ENCODE measurements at regions of chrX and their contacts with region 1.

Region 1: DNA sequence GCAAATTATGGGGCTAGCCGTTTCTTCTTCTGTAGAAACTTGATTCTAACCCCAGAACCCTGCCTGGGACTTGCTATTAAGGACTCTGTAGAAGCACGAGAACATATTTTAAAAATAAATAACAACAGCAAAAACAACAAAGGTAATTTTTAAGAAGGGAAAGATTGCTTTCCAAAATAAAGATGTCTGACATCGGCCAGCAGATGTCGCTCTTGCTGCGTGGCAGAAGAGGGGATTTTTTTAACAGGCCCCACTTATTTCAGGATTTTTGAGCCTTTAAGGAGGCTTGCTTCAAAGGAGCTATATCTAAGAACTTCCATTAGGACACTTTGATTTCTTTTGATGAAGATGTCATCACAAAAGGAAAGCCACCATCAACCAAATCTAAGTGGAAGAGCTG is 62.8 kb upstream of the EGFL6 start:
- DNase-seq: peak; percentile 56
- H3K4me3 ChIP-seq: no peak overlapping the region
- H3K27ac ChIP-seq: no peak overlapping the region
- H3K4me1 ChIP-seq: no peaks in the 10 kb centered on the region
- H3K27me3 ChIP-seq: no peaks in the 10 kb centered on the region
- CTCF ChIP-seq: peak; percentile 64 to 87 (median 71)
- EP300 ChIP-seq: no peak
- POLR2A ChIP-seq: no peak

Region 2: DNA sequence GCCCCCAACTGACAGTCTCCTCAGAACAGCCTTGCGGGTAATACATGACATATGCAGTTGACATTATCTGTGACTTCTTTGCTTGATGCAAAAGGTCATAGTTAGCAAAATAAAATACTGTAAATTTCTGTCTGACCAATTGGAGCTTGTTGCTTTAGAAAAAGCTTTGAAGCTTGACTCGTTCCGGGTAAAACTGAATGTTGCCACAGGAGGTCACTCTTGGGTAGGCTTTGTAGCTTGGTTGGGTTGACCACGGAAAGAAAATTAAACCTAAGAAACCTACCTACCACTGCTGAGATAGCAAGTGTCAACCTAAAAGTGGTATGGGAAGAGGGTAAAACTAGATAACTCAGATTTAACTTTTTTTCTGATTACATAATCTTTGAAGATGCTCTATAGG is 692.2 kb before region 1 on chrX:
- in situ Hi-C with region 1: loop called in 1 of 4 experiments (anchors 25 kb)
- intact Hi-C with region 1: no loop called
- DNase-seq: peak; percentile 41
- H3K4me3 ChIP-seq: no peak overlapping the region
- H3K27ac ChIP-seq: no peak overlapping the region
- H3K4me1 ChIP-seq: no peaks in the 10 kb centered on the region
- H3K27me3 ChIP-seq: no peaks in the 10 kb centered on the region
- CTCF ChIP-seq: peak; percentile 35 to 53 (median 38)
- EP300 ChIP-seq: no peak
- POLR2A ChIP-seq: no peak

Region 3: GRCh38 chrX:13198056-13198761 is 308.4 kb before region 1 on chrX:
- in situ Hi-C with region 1: no loop called
- intact Hi-C with region 1: no loop called
- DNase-seq: no peak
- H3K4me3 ChIP-seq: no peak overlapping the region
- H3K27ac ChIP-seq: no peak overlapping the region
- H3K4me1 ChIP-seq: no peaks in the 10 kb centered on the region
- H3K27me3 ChIP-seq: no peaks in the 10 kb centered on the region
- CTCF ChIP-seq: no peak
- EP300 ChIP-seq: no peak
- POLR2A ChIP-seq: no peak

Region 4: DNA sequence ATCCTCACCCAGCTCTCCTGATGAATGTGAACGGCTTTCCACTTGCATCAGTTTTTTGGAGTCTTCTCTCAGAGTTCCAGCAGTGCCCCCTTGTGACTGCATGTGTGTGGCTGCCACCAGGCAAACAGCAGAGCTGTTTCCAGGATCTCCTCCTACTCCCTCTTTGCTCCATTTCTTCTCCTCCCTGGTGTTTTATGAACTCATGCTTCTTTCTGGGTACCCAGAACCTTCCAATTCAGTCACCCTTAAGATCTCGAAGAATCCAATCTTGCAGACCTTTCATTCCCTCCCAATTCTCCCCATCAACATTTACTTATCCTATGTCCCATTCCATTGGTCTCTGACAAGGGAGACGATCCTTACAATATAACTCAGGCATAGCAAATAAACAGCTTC is 139.6 kb after region 1 on chrX:
- in situ Hi-C with region 1: loop called in 1 of 4 experiments (anchors 25 kb)
- intact Hi-C with region 1: no loop called
- DNase-seq: peak; percentile 66
- H3K4me3 ChIP-seq: no peak overlapping the region
- H3K27ac ChIP-seq: no peak overlapping the region
- H3K4me1 ChIP-seq: no peaks in the 10 kb centered on the region
- H3K27me3 ChIP-seq: no peaks in the 10 kb centered on the region
- CTCF ChIP-seq: peak; percentile 37 to 63 (median 46)
- EP300 ChIP-seq: no peak
- POLR2A ChIP-seq: no peak

Region 5: DNA sequence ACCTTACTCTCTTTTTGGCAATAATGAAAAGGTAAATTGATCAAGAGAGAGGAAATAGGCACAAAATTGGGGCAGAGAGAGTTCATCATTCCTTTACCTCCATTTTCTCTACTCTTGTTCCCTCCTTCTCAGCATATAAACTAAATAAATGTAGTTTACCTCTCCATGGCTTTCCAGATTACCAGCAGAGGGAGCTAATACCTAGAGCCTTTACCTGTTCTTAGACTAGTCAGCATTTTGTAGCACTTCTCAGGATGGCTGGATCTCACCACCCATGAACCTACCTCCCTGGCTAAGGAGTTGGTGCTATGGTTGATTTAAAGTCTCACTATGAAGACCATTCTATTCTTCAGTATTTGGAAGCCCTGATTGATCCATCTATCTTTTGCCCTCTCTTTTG is 243.6 kb after region 1 on chrX:
- in situ Hi-C with region 1: loop called in 1 of 4 experiments (anchors 25 kb)
- intact Hi-C with region 1: no loop called
- DNase-seq: no peak
- H3K4me3 ChIP-seq: no peak overlapping the region
- H3K27ac ChIP-seq: no peak overlapping the region
- H3K4me1 ChIP-seq: no peaks in the 10 kb centered on the region
- H3K27me3 ChIP-seq: no peaks in the 10 kb centered on the region
- CTCF ChIP-seq: peak; percentile 37 to 46 (median 43)
- EP300 ChIP-seq: no peak
- POLR2A ChIP-seq: no peak

Measured in transverse colon (tissue), 4 donors.